CD8-positive, alpha-beta T cell (primary cell): ENCODE measurements at regions of chr6 and their contacts with region 1.

Region 1: GRCh38 chr6:63764318-63764916 is 128.8 kb downstream of the PHF3 start:
- DNase-seq: peak in 3 of 9 experiments; percentile 4 to 68 (median 59)
- ATAC-seq: no peak
- H3K4me3 ChIP-seq: no peak overlapping the region
- H3K4me3 Mint-ChIP-seq: no peak overlapping the region
- H3K27ac ChIP-seq: no peak overlapping the region
- H3K27ac Mint-ChIP-seq: no peak overlapping the region
- H3K4me1 ChIP-seq: no peaks in the 10 kb centered on the region
- H3K4me1 Mint-ChIP-seq: no peaks in the 10 kb centered on the region
- H3K27me3 ChIP-seq: no peaks in the 10 kb centered on the region
- H3K27me3 Mint-ChIP-seq: peaks cover 7% of the 10 kb centered on the region
- CTCF ChIP-seq: peak; percentile 77

Region 2: GRCh38 chr6:63352587-63353285 is 411.7 kb before region 1 on chr6:
- CTCF ChIA-PET with region 1: no interaction called
- POLR2A ChIA-PET with region 1: no interaction called
- intact Hi-C with region 1: loop called (anchors 2 to 10 kb)
- DNase-seq: peak in 1 of 9 experiments; percentile 34
- ATAC-seq: no peak
- H3K4me3 ChIP-seq: no peak overlapping the region
- H3K4me3 Mint-ChIP-seq: no peak overlapping the region
- H3K27ac ChIP-seq: no peak overlapping the region
- H3K27ac Mint-ChIP-seq: no peak overlapping the region
- H3K4me1 ChIP-seq: no peaks in the 10 kb centered on the region
- H3K4me1 Mint-ChIP-seq: peaks cover 7% of the 10 kb centered on the region
- H3K27me3 ChIP-seq: no peaks in the 10 kb centered on the region
- H3K27me3 Mint-ChIP-seq: peaks cover 8% of the 10 kb centered on the region
- CTCF ChIP-seq: no peak

Region 3: GRCh38 chr6:63496361-63496804 is 268.0 kb before region 1 on chr6:
- CTCF ChIA-PET with region 1: no interaction called
- POLR2A ChIA-PET with region 1: no interaction called
- intact Hi-C with region 1: loop called in 1 of 2 experiments (anchors 5 kb)
- DNase-seq: no peak
- ATAC-seq: no peak
- H3K4me3 ChIP-seq: no peak overlapping the region
- H3K4me3 Mint-ChIP-seq: no peak overlapping the region
- H3K27ac ChIP-seq: no peak overlapping the region
- H3K27ac Mint-ChIP-seq: no peak overlapping the region
- H3K4me1 ChIP-seq: no peaks in the 10 kb centered on the region
- H3K4me1 Mint-ChIP-seq: no peaks in the 10 kb centered on the region
- H3K27me3 ChIP-seq: no peaks in the 10 kb centered on the region
- H3K27me3 Mint-ChIP-seq: peaks cover 6% of the 10 kb centered on the region
- CTCF ChIP-seq: no peak